Activated B cell treated with CpG ODN at 0.5 μM for 24 hours (primary cell): ENCODE measurements at regions of chr7 and their contacts with region 1.

Region 1: GRCh38 chr7:107661081-107661864 is 645 bp downstream of the SLC26A4 start:
- DNase-seq: peak; percentile 42
- ATAC-seq: peak; percentile 49
- H3K4me3 Mint-ChIP-seq: peak overlapping the region; percentile 88
- H3K27ac Mint-ChIP-seq: no peak overlapping the region
- H3K4me1 Mint-ChIP-seq: peaks cover 23% of the 10 kb centered on the region
- H3K27me3 Mint-ChIP-seq: peaks cover 20% of the 10 kb centered on the region
- CTCF ChIP-seq: no peak

Region 2: GRCh38 chr7:107462740-107463444 is 198.4 kb before region 1 on chr7:
- CTCF ChIA-PET with region 1: interaction called, 4 read pairs
- POLR2A ChIA-PET with region 1: no interaction called
- intact Hi-C with region 1: loop called (anchors 1 kb)
- DNase-seq: no peak
- ATAC-seq: peak; percentile 75
- H3K4me3 Mint-ChIP-seq: no peak overlapping the region
- H3K27ac Mint-ChIP-seq: no peak overlapping the region
- H3K4me1 Mint-ChIP-seq: no peaks in the 10 kb centered on the region
- H3K27me3 Mint-ChIP-seq: no peaks in the 10 kb centered on the region
- CTCF ChIP-seq: no peak

Region 3: GRCh38 chr7:107579885-107580715 is 81.2 kb before region 1 on chr7 and contains the start of gene BCAP29:
- CTCF ChIA-PET with region 1: interaction called, 3 read pairs
- POLR2A ChIA-PET with region 1: no interaction called
- intact Hi-C with region 1: loop called (anchors 1 kb)
- DNase-seq: peak; percentile 81
- ATAC-seq: peak; percentile 98
- H3K4me3 Mint-ChIP-seq: peak within 1 kb of the TSS; percentile 95
- H3K27ac Mint-ChIP-seq: peak within 1 kb of the TSS; percentile 90
- H3K4me1 Mint-ChIP-seq: peaks cover 23% of the 10 kb centered on the region
- H3K27me3 Mint-ChIP-seq: no peaks in the 10 kb centered on the region
- CTCF ChIP-seq: no peak
- total RNA-seq, gene BCAP29: 23.9 and 24.9 TPM in 2 replicates

Region 4: DNA sequence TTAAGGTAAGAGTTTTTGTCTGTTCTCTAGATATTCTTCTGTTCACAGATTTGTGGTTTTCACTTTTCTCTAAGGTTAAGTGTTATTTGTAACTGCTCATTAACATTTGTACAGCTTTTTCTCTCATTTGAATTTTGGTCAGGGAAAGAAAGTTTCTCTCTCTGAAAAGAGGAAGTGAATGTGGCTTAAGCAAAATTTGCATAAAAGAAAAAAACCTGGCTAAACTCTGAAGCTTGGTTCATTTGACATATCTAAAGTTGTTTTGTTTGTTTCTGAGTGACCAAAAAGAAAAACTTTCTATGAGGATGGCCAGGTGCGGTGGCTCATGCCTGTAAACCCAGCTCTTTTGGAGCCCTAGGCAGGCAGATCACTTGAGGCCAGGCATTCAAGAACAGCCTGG is 22.7 kb before region 1 on chr7:
- CTCF ChIA-PET with region 1: interaction called, 4 read pairs
- POLR2A ChIA-PET with region 1: interaction called, 32 read pairs
- intact Hi-C with region 1: loop called (anchors 1 kb)
- DNase-seq: no peak
- ATAC-seq: peak; percentile 77
- H3K4me3 Mint-ChIP-seq: peak overlapping the region; percentile 75
- H3K27ac Mint-ChIP-seq: peak overlapping the region; percentile 95
- H3K4me1 Mint-ChIP-seq: peaks cover 65% of the 10 kb centered on the region
- H3K27me3 Mint-ChIP-seq: no peaks in the 10 kb centered on the region
- CTCF ChIP-seq: no peak

Region 5: GRCh38 chr7:107678110-107678753 is 17.0 kb after region 1 on chr7:
- CTCF ChIA-PET with region 1: interaction called, 5 read pairs
- POLR2A ChIA-PET with region 1: no interaction called
- intact Hi-C with region 1: loop called (anchors 2 kb)
- DNase-seq: no peak
- ATAC-seq: peak; percentile 54
- H3K4me3 Mint-ChIP-seq: peak overlapping the region; percentile 57
- H3K27ac Mint-ChIP-seq: peak overlapping the region; percentile 93
- H3K4me1 Mint-ChIP-seq: peaks cover 26% of the 10 kb centered on the region
- H3K27me3 Mint-ChIP-seq: no peaks in the 10 kb centered on the region
- CTCF ChIP-seq: no peak